ENCODE measurements at regions of chr11 and their contacts with region 1.

Region 1: DNA sequence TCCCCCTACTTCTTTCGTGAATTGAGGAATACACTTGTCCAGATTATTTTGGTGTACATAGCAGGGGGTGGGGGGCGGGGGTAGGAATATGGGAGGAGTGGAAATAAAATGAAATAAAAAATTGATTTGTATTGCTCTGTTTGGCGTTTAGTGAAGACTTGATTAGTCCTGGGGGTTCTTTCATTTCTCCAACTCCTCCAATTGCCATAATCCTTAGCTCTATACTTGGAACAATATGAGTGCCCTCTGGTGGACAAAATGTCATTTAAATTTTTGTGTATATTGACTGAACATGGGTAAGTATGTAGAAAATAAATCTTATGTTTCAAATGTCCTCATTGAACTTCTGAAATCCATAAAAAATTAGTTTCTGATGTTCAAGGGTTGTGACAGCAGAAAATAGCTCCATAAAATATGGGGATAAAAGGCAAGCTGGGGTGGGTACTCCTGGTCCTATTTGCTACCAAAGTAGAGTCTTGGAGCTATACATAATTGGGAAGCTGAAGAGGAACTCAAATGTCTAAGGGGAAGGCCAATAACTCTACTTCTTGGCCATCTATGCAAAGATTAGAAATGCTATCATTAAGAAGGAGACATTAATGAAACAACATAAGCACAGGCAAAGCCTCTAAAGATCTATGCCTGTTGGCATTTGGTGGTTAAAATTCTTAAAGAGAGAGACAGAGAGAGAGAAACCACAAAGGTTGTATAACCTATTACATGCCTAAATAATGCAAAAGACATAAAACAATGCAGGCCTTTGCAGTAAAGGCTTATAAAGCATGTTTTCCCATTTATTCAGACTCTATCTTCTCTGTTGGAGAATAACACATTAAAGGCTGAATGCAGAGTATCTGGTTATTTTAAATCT is 421.6 kb downstream of the METTL15 start:
- DNase-seq: peak; percentile 37
- ATAC-seq: peak; percentile 81
- H3K4me3 ChIP-seq: no peak overlapping the region
- H3K27ac ChIP-seq: no peak overlapping the region
- H3K4me1 ChIP-seq: no peaks in the 10 kb centered on the region
- H3K27me3 ChIP-seq: no peaks in the 10 kb centered on the region
- CTCF ChIP-seq: peak; percentile 33 to 65 (median 50); a peak in 5 of 6 replicates
- POLR2A ChIP-seq: no peak
- RAD21 ChIP-seq: peak; percentile 77

Region 2: GRCh38 chr11:27718346-27718852 is 811.4 kb before region 1 on chr11:
- CTCF ChIA-PET with region 1: interaction called, 30 read pairs
- POLR2A ChIA-PET with region 1: interaction called, 3 read pairs
- RAD21 ChIA-PET with region 1: interaction called in 1 of 2 experiments, 5 read pairs
- intact Hi-C with region 1: no loop called
- DNase-seq: peak; percentile 73
- ATAC-seq: peak; percentile 84
- H3K4me3 ChIP-seq: peak overlapping the region; percentile 57 to 62
- H3K27ac ChIP-seq: peak overlapping the region; percentile 85
- H3K4me1 ChIP-seq: peaks cover 18 to 28% of the 10 kb centered on the region in 2 experiments; a peak in 3 of 4 replicates
- H3K27me3 ChIP-seq: no peaks in the 10 kb centered on the region
- CTCF ChIP-seq: no peak
- POLR2A ChIP-seq: peak; percentile 87
- RAD21 ChIP-seq: no peak

Region 3: DNA sequence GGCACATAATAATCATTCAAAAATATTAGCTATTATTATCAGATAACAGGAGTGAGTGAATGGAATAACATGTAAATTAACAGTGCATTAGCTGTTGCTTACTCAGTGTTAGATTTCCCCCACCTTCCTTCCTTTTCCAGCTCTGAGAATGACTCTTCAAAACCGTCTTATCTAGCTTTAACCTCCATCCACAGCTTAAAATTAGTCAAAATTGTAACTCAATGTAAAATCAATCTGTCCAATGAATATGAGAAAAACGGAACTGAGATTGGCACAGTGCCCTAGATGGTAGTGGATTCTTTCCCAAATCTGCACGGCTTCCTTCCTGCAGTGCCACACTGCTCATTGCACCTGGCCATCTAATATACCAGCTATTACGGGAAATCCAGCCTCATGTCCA is 672.8 kb before region 1 on chr11:
- CTCF ChIA-PET with region 1: no interaction called
- POLR2A ChIA-PET with region 1: interaction called, 3 read pairs
- RAD21 ChIA-PET with region 1: no interaction called
- intact Hi-C with region 1: loop called (anchors 10 kb)
- DNase-seq: no peak
- ATAC-seq: no peak
- H3K4me3 ChIP-seq: no peak overlapping the region
- H3K27ac ChIP-seq: no peak overlapping the region
- H3K4me1 ChIP-seq: peaks cover 0 to 11% of the 10 kb centered on the region in 2 experiments; a peak in 2 of 4 replicates
- H3K27me3 ChIP-seq: no peaks in the 10 kb centered on the region
- CTCF ChIP-seq: no peak
- POLR2A ChIP-seq: no peak
- RAD21 ChIP-seq: no peak

Region 4: DNA sequence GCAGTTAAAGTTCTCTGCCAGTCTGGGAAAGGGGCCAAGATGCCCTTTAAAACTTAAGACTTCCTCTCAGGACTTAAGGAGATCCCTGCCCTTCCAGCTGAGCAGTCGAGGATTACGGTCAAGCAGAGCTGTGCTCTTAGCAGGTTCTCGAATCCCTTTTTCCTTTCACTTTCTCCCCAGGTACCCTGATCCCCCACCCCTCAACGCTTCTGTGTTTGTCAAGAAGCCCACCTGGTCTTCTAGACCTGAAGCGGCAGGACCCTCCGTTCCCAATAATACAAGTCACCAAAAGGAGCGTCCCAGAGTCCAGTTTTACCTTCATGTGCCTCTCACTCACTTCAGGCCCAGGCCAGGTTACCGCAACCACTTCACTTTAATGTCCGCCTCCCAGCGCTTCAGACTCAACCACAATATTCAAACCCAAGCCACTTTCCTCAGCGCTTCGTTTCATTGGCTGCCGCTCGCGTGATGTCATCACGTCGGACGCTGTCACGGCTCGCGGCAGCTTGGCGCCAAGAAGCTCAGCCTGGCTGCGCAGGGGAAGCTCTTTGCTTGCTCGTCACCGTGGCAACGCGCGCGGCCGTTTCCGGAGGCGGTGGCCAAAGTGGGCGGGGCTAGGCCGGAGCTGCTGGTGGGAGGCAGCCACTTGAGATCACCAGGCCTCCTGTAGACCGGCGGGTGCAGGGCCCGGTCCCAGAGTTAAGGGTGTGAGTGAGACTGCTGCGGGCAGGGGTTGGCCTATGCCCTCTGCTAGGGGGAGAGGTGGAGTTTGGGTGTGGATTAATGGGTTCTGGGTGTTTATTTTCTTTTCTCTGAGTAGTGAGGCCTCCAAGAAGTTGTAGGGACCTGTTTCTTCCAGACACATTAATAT is 421.8 kb before region 1 on chr11 and contains the starts of genes KIF18A and METTL15:
- CTCF ChIA-PET with region 1: no interaction called
- POLR2A ChIA-PET with region 1: interaction called, 3 read pairs
- RAD21 ChIA-PET with region 1: no interaction called
- intact Hi-C with region 1: loop called (anchors 10 kb)
- DNase-seq: peak; percentile 97
- ATAC-seq: peak; percentile 89
- H3K4me3 ChIP-seq: peak within 1 kb of the TSS; percentile 78 to 81
- H3K27ac ChIP-seq: peak within 1 kb of the TSS; percentile 73
- H3K4me1 ChIP-seq: peaks cover 23 to 34% of the 10 kb centered on the region in 2 experiments; a peak in 3 of 4 replicates
- H3K27me3 ChIP-seq: no peaks in the 10 kb centered on the region
- CTCF ChIP-seq: no peak
- POLR2A ChIP-seq: peak; percentile 75
- RAD21 ChIP-seq: peak; percentile 4; the same call in 1 of the 2 replicates
- total RNA-seq, gene KIF18A: 50.7 TPM
- total RNA-seq, gene METTL15: 25.3 TPM

Region 5: DNA sequence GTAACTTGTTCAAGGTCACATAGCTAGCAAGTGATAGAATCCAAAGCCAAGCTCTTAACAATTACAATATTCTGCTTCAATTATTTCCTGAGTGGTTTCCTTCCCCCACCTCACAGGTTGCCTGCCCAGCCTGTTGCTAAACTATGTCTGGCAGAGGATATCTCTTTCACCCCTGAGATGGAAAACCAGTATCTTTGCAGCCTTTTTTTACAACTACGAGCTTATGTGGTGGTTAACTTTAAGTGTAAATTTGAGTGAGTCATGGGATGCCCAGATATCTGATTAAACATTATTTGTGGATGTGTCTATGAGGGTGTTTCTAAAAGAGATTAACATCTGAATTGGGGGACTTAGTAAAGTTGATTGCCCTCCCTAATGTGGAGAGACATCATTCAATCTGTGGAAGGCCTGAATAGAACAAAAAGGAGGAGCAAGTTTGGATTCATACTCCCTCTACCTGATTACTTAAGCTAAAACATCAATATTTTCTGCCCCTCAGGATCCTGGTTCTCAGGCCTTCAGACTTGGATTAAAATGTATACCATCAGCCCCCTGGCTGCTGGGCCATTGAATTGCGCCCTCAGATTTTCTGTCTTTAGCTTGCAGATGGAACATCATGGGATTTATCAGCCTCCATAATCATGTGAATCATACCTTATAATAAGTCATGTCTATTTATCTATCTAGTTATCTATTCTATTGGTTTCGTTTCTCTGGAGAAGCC is 490.3 kb after region 1 on chr11:
- CTCF ChIA-PET with region 1: interaction called, 10 read pairs
- POLR2A ChIA-PET with region 1: no interaction called
- RAD21 ChIA-PET with region 1: no interaction called
- intact Hi-C with region 1: no loop called
- DNase-seq: peak; percentile 29
- ATAC-seq: peak; percentile 83
- H3K4me3 ChIP-seq: no peak overlapping the region
- H3K27ac ChIP-seq: no peak overlapping the region
- H3K4me1 ChIP-seq: peaks cover 0 to 3% of the 10 kb centered on the region in 2 experiments; a peak in 1 of 4 replicates
- H3K27me3 ChIP-seq: no peaks in the 10 kb centered on the region
- CTCF ChIP-seq: peak; percentile 54 to 75 (median 73); a peak in 5 of 6 replicates
- POLR2A ChIP-seq: no peak
- RAD21 ChIP-seq: peak; percentile 71

Region 6: DNA sequence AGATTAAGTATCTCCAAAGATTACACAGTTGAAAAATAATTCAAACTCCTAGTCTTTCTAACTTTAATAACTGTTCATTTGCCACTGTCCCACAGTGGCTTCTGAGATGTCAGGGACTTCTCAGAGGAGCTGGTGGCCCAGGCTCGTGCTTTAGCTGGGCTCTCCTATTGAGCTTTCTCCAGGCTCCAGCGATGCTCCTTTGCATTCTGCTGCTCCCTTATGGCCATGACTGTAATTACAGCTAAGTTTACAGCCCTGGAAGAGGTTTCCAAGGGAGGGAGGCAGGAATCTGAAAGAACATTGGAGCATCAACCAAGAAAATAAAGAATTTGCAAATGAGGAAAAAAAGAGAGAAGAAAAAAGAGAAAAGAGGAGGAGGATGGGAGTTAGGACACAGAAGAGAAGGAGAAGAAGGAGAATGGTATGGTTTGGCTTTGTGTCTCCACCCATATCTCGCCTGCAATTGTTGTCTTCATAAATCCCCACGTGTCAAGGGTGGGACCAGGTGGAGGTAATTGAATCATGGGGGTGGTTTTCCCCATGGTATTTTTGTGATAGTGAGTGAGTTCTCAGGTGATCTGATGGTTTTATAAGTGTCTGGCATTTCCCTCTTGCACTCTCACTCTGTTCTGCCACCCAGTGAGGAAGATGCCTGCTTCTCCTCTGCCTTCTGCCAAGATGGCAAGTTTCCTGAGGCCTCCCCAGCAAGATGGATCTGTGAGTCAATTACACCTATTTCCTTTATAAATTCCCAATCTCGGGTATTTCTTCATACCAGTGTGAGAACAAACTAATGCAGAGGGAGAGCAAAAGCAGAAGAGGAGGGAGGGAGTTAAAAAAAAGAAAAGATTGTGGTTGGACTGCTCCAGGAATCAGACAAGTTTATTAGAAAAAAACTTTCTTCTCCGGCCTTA is 630.0 kb after region 1 on chr11:
- CTCF ChIA-PET with region 1: interaction called, 10 read pairs
- POLR2A ChIA-PET with region 1: no interaction called
- RAD21 ChIA-PET with region 1: interaction called in 1 of 2 experiments, 3 read pairs
- intact Hi-C with region 1: no loop called
- DNase-seq: peak; percentile 31
- ATAC-seq: peak; percentile 99
- H3K4me3 ChIP-seq: no peak overlapping the region
- H3K27ac ChIP-seq: no peak overlapping the region
- H3K4me1 ChIP-seq: no peaks in the 10 kb centered on the region
- H3K27me3 ChIP-seq: no peaks in the 10 kb centered on the region
- CTCF ChIP-seq: peak; percentile 53 to 78 (median 65); a peak in 5 of 6 replicates
- POLR2A ChIP-seq: peak; percentile 36
- RAD21 ChIP-seq: peak; percentile 81

Region 7: GRCh38 chr11:29333993-29334775 is 804.4 kb after region 1 on chr11:
- CTCF ChIA-PET with region 1: interaction called, 4 read pairs
- POLR2A ChIA-PET with region 1: no interaction called
- RAD21 ChIA-PET with region 1: no interaction called
- intact Hi-C with region 1: loop called (anchors 10 kb)
- DNase-seq: peak; percentile 29
- ATAC-seq: peak; percentile 88
- H3K4me3 ChIP-seq: no peak overlapping the region
- H3K27ac ChIP-seq: no peak overlapping the region
- H3K4me1 ChIP-seq: peaks cover 0 to 2% of the 10 kb centered on the region in 2 experiments; a peak in 1 of 4 replicates
- H3K27me3 ChIP-seq: no peaks in the 10 kb centered on the region
- CTCF ChIP-seq: peak; percentile 40 to 60 (median 55); a peak in 4 of 6 replicates
- POLR2A ChIP-seq: no peak
- RAD21 ChIP-seq: peak; percentile 82